ENCODE measurements at regions of chr2 and their contacts with region 1.

Region 1: GRCh38 chr2:237955640-237956401 is 11.0 kb upstream of the UBE2F start:
- DNase-seq: no peak
- H3K4me3 ChIP-seq: peak overlapping the region; percentile 45
- H3K27ac ChIP-seq: no peak overlapping the region
- H3K27me3 ChIP-seq: peaks cover 32% of the 10 kb centered on the region
- CTCF ChIP-seq: no peak

Region 2: DNA sequence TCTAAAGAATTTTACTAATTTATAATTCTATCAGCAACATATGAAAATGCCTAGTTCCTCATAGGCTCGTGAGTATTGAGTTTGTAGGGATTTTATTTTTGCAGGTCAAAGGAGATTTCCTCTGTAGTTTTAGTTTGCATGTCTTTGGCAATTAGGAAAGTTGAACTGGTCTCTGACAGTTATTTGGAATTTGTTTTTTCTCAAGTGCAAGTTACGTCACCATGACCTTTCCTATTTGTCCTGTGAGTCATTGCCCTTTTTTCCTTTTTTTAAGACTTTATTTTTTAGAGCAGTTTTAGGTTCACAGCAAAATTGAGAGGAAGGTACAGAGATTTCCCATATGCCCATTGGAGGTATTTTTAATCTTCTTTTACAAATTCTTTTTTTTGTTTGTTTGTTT is 67.4 kb before region 1 on chr2:
- CTCF ChIA-PET with region 1: interaction called, 3 read pairs
- POLR2A ChIA-PET with region 1: interaction called, 14 read pairs
- DNase-seq: no peak
- H3K4me3 ChIP-seq: no peak overlapping the region
- H3K27ac ChIP-seq: no peak overlapping the region
- H3K27me3 ChIP-seq: no peaks in the 10 kb centered on the region
- CTCF ChIP-seq: no peak

Measured in AG04450 (cell line).